Heart left ventricle (tissue), 16 donors: ENCODE measurements at regions of chr7 and their contacts with region 1.

Region 1: DNA sequence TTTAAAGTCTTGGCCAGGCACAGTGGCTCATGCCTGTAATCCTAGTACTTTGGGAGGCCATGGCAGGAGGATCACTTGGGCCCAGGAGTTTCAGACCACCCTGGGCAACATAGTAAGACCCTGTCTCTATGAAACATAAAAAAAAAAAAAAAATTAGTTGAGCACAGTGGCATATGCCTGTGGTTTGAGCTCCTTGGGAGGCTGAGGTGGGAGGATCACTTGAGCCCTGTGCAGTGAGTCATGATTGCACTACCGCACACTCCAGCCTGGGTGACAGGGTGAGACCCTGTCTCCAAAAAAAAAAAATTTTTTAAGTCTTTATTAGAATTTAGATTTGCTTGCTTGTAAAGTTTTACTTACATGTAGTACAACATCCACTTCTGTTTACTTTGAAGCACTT is 14.0 kb downstream of the WNT2 start:
- DNase-seq: no peak
- ATAC-seq: no peak
- H3K4me3 ChIP-seq: no peak overlapping the region
- H3K27ac ChIP-seq: no peak overlapping the region
- H3K4me1 ChIP-seq: no peaks in the 10 kb centered on the region
- H3K27me3 ChIP-seq: no peaks in the 10 kb centered on the region
- CTCF ChIP-seq: no peak
- POLR2A ChIP-seq: no peak

Region 2: GRCh38 chr7:117248829-117249228 is 60.1 kb before region 1 on chr7:
- intact Hi-C with region 1: loop called in 1 of 10 experiments (anchors 10 kb)
- DNase-seq: no peak
- ATAC-seq: no peak
- H3K4me3 ChIP-seq: no peak overlapping the region
- H3K27ac ChIP-seq: no peak overlapping the region
- H3K4me1 ChIP-seq: no peaks in the 10 kb centered on the region
- H3K27me3 ChIP-seq: peaks cover 0 to 6% (median 0%) of the 10 kb centered on the region in 9 donors
- CTCF ChIP-seq: no peak
- POLR2A ChIP-seq: no peak

Region 3: GRCh38 chr7:117338020-117338419 is 29.1 kb after region 1 on chr7:
- intact Hi-C with region 1: no loop called
- DNase-seq: no peak
- ATAC-seq: no peak
- H3K4me3 ChIP-seq: no peak overlapping the region
- H3K27ac ChIP-seq: no peak overlapping the region
- H3K4me1 ChIP-seq: no peaks in the 10 kb centered on the region
- H3K27me3 ChIP-seq: peaks cover 0 to 4% (median 0%) of the 10 kb centered on the region in 9 donors
- CTCF ChIP-seq: no peak
- POLR2A ChIP-seq: no peak